CD4-positive, alpha-beta memory T cell (primary cell): ENCODE measurements at regions of chr11 and their contacts with region 1.

Region 1: GRCh38 chr11:68213555-68214174 is 569 bp upstream of the KMT5B start:
- DNase-seq: peak; percentile 79 to 90 (median 87)
- H3K4me3 ChIP-seq: peak overlapping the region in 1 of 2 donors; percentile 75
- H3K4me3 Mint-ChIP-seq: peak overlapping the region; percentile 59 to 89 (median 78)
- H3K27ac ChIP-seq: peak overlapping the region; percentile 69
- H3K27ac Mint-ChIP-seq: peak overlapping the region in 4 of 7 donors; percentile 63 to 98 (median 76)
- H3K4me1 ChIP-seq: peaks cover 49% of the 10 kb centered on the region
- H3K4me1 Mint-ChIP-seq: peaks cover 32 to 52% (median 41%) of the 10 kb centered on the region in 4 donors
- H3K27me3 ChIP-seq: no peaks in the 10 kb centered on the region
- H3K27me3 Mint-ChIP-seq: peaks cover 6 to 13% of the 10 kb centered on the region in 2 donors

Region 2: GRCh38 chr11:68003846-68004550 is 209.7 kb before region 1 on chr11 and contains the start of gene UNC93B1:
- CTCF ChIA-PET with region 1: no interaction called
- POLR2A ChIA-PET with region 1: no interaction called
- intact Hi-C with region 1: loop called (anchors 5 kb)
- DNase-seq: peak; percentile 77 to 84 (median 78)
- H3K4me3 ChIP-seq: peak within 1 kb of the TSS; percentile 52 to 59
- H3K4me3 Mint-ChIP-seq: peak within 1 kb of the TSS; percentile 86 to 94 (median 88)
- H3K27ac ChIP-seq: no peak within 1 kb of the TSS
- H3K27ac Mint-ChIP-seq: peak within 1 kb of the TSS; percentile 73 to 90 (median 88)
- H3K4me1 ChIP-seq: peaks cover 11% of the 10 kb centered on the region
- H3K4me1 Mint-ChIP-seq: peaks cover 8 to 31% (median 15%) of the 10 kb centered on the region in 4 donors
- H3K27me3 ChIP-seq: no peaks in the 10 kb centered on the region
- H3K27me3 Mint-ChIP-seq: no peaks in the 10 kb centered on the region
- total RNA-seq, gene UNC93B1: 22.4 to 26.8 TPM

Region 3: GRCh38 chr11:68191661-68192579 is 21.7 kb before region 1 on chr11:
- CTCF ChIA-PET with region 1: interaction called, 51 read pairs
- POLR2A ChIA-PET with region 1: no interaction called
- intact Hi-C with region 1: no loop called
- DNase-seq: no peak
- H3K4me3 ChIP-seq: no peak overlapping the region
- H3K4me3 Mint-ChIP-seq: peak overlapping the region in 2 of 8 donors; percentile 3 to 36
- H3K27ac ChIP-seq: no peak overlapping the region
- H3K27ac Mint-ChIP-seq: peak overlapping the region in 4 of 7 donors; percentile 26 to 82 (median 32)
- H3K4me1 ChIP-seq: peaks cover 36% of the 10 kb centered on the region
- H3K4me1 Mint-ChIP-seq: peaks cover 36 to 57% (median 46%) of the 10 kb centered on the region in 4 donors
- H3K27me3 ChIP-seq: no peaks in the 10 kb centered on the region
- H3K27me3 Mint-ChIP-seq: no peaks in the 10 kb centered on the region

Region 4: GRCh38 chr11:68199295-68199987 is 14.2 kb before region 1 on chr11:
- CTCF ChIA-PET with region 1: interaction called, 51 read pairs
- POLR2A ChIA-PET with region 1: interaction called, 3 read pairs
- intact Hi-C with region 1: no loop called
- DNase-seq: no peak
- H3K4me3 ChIP-seq: no peak overlapping the region
- H3K4me3 Mint-ChIP-seq: peak overlapping the region in 2 of 8 donors; percentile 1 to 18
- H3K27ac ChIP-seq: no peak overlapping the region
- H3K27ac Mint-ChIP-seq: peak overlapping the region in 2 of 7 donors; percentile 3 to 37
- H3K4me1 ChIP-seq: peaks cover 62% of the 10 kb centered on the region
- H3K4me1 Mint-ChIP-seq: peaks cover 47 to 93% (median 65%) of the 10 kb centered on the region in 4 donors
- H3K27me3 ChIP-seq: no peaks in the 10 kb centered on the region
- H3K27me3 Mint-ChIP-seq: no peaks in the 10 kb centered on the region

Region 5: GRCh38 chr11:68271781-68272608 is 58.3 kb after region 1 on chr11 and contains the start of gene C11orf24:
- CTCF ChIA-PET with region 1: interaction called, 5 read pairs
- POLR2A ChIA-PET with region 1: interaction called, 4 read pairs
- intact Hi-C with region 1: loop called (anchors 2 kb)
- DNase-seq: peak; percentile 91 to 95 (median 91)
- H3K4me3 ChIP-seq: peak within 1 kb of the TSS; percentile 78 to 79
- H3K4me3 Mint-ChIP-seq: peak within 1 kb of the TSS; percentile 90 to 98 (median 96)
- H3K27ac ChIP-seq: peak within 1 kb of the TSS; percentile 89
- H3K27ac Mint-ChIP-seq: peak within 1 kb of the TSS; percentile 94 to 99 (median 98)
- H3K4me1 ChIP-seq: peaks cover 20% of the 10 kb centered on the region
- H3K4me1 Mint-ChIP-seq: peaks cover 16 to 46% (median 31%) of the 10 kb centered on the region in 4 donors
- H3K27me3 ChIP-seq: no peaks in the 10 kb centered on the region
- H3K27me3 Mint-ChIP-seq: no peaks in the 10 kb centered on the region
- total RNA-seq, gene C11orf24: 19.1 to 20.3 TPM

Region 6: GRCh38 chr11:68297812-68298658 is 84.4 kb after region 1 on chr11:
- CTCF ChIA-PET with region 1: interaction called, 29 read pairs
- POLR2A ChIA-PET with region 1: no interaction called
- intact Hi-C with region 1: loop called (anchors 1 kb)
- DNase-seq: peak; percentile 58 to 76 (median 63)
- H3K4me3 ChIP-seq: no peak overlapping the region
- H3K4me3 Mint-ChIP-seq: no peak overlapping the region
- H3K27ac ChIP-seq: no peak overlapping the region
- H3K27ac Mint-ChIP-seq: peak overlapping the region in 1 of 7 donors; percentile 24
- H3K4me1 ChIP-seq: peaks cover 7% of the 10 kb centered on the region
- H3K4me1 Mint-ChIP-seq: peaks cover 0 to 4% (median 0%) of the 10 kb centered on the region in 4 donors
- H3K27me3 ChIP-seq: no peaks in the 10 kb centered on the region
- H3K27me3 Mint-ChIP-seq: no peaks in the 10 kb centered on the region

Region 7: GRCh38 chr11:68342459-68343158 is 128.9 kb after region 1 on chr11:
- CTCF ChIA-PET with region 1: no interaction called
- POLR2A ChIA-PET with region 1: no interaction called
- intact Hi-C with region 1: no loop called
- DNase-seq: no peak
- H3K4me3 ChIP-seq: no peak overlapping the region
- H3K4me3 Mint-ChIP-seq: no peak overlapping the region
- H3K27ac ChIP-seq: no peak overlapping the region
- H3K27ac Mint-ChIP-seq: no peak overlapping the region
- H3K4me1 ChIP-seq: peaks cover 32% of the 10 kb centered on the region
- H3K4me1 Mint-ChIP-seq: peaks cover 25 to 39% (median 31%) of the 10 kb centered on the region in 4 donors
- H3K27me3 ChIP-seq: no peaks in the 10 kb centered on the region
- H3K27me3 Mint-ChIP-seq: no peaks in the 10 kb centered on the region

Region 8: GRCh38 chr11:68354148-68354872 is 140.6 kb after region 1 on chr11:
- CTCF ChIA-PET with region 1: no interaction called
- POLR2A ChIA-PET with region 1: no interaction called
- intact Hi-C with region 1: no loop called
- DNase-seq: no peak
- H3K4me3 ChIP-seq: no peak overlapping the region
- H3K4me3 Mint-ChIP-seq: no peak overlapping the region
- H3K27ac ChIP-seq: no peak overlapping the region
- H3K27ac Mint-ChIP-seq: no peak overlapping the region
- H3K4me1 ChIP-seq: no peaks in the 10 kb centered on the region
- H3K4me1 Mint-ChIP-seq: peaks cover 0 to 3% (median 0%) of the 10 kb centered on the region in 4 donors
- H3K27me3 ChIP-seq: no peaks in the 10 kb centered on the region
- H3K27me3 Mint-ChIP-seq: no peaks in the 10 kb centered on the region

Region 9: DNA sequence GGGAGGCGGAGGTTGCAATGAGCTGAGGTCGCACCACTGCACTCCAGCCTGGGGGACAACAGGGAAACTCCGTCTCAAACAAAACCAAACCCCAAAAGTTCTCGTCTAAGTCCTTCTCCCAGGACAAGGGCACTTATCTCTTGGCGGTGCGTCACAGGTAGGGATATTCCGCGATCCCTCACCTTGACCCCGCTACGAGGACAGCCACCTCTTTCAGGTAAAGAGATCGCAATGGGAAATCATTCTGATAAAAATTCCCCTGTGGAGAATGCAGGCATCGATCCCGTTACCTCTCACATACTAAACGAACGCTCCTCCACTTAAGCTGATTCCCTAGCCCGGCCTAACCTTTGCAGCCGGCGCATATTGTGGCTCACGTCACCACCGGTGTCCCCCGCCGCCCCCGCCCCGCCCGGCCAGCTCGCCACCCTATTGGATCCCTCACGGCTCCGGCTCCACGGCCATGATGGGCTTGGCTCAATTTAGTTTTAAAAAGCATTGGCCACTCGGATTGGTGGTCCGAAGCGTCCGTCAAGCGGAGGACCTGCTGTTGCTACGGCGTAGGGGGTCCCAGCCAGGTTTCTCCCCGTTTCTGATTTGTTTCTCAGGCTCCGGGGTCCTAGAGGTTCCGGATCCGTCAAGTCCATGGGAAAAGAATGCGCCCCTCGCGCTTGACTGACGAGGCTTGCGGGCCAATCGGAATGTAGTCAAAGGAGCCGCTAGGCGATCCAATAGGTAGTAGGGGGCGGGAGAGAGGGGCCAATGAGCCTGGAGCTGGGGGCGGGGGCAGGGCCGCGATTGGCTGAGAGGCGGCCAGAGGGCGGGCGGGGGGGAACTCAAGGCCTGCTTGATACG is 246.4 kb after region 1 on chr11:
- CTCF ChIA-PET with region 1: interaction called, 3 read pairs
- POLR2A ChIA-PET with region 1: interaction called, 3 read pairs
- intact Hi-C with region 1: loop called (anchors 5 kb)
- DNase-seq: peak; percentile 95 to 97 (median 96)
- H3K4me3 ChIP-seq: peak overlapping the region; percentile 75 to 90
- H3K4me3 Mint-ChIP-seq: peak overlapping the region; percentile 93 to 99 (median 95)
- H3K27ac ChIP-seq: peak overlapping the region; percentile 93
- H3K27ac Mint-ChIP-seq: peak overlapping the region; percentile 98 to 100 (median 99)
- H3K4me1 ChIP-seq: peaks cover 44% of the 10 kb centered on the region
- H3K4me1 Mint-ChIP-seq: peaks cover 22 to 44% (median 32%) of the 10 kb centered on the region in 4 donors
- H3K27me3 ChIP-seq: no peaks in the 10 kb centered on the region
- H3K27me3 Mint-ChIP-seq: peaks cover 0 to 6% of the 10 kb centered on the region in 2 donors